ENCODE measurements at regions of chr10 and their contacts with region 1.

Region 1: DNA sequence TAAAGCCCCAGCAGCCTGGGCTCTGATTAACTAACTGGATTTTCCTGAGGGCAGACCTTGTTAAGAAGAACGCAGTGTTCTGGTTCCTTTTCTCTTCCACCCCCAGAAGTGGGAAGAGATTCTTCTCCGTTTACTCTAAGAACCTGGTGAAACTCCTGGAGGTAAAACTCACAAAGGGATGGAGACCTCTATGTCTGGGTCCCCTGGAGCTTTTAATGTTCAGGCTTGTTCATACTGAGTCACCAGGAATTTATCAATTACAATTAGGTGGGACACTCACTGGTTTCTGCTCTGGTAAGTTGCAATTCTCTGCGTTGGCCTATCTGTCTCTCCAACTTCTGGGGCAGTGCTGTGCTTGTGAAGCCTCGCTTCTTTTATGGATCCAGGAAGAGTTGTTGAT is 73.3 kb upstream of the CACNB2 start:
- DNase-seq: no peak
- H3K4me3 ChIP-seq: no peak overlapping the region
- H3K4me3 Mint-ChIP-seq: no peak overlapping the region
- H3K27ac ChIP-seq: no peak overlapping the region
- H3K27ac Mint-ChIP-seq: no peak overlapping the region
- H3K4me1 ChIP-seq: no peaks in the 10 kb centered on the region
- H3K4me1 Mint-ChIP-seq: no peaks in the 10 kb centered on the region
- H3K27me3 ChIP-seq: no peaks in the 10 kb centered on the region
- H3K27me3 Mint-ChIP-seq: peaks cover 0 to 3% of the 10 kb centered on the region in 2 donors

Region 2: DNA sequence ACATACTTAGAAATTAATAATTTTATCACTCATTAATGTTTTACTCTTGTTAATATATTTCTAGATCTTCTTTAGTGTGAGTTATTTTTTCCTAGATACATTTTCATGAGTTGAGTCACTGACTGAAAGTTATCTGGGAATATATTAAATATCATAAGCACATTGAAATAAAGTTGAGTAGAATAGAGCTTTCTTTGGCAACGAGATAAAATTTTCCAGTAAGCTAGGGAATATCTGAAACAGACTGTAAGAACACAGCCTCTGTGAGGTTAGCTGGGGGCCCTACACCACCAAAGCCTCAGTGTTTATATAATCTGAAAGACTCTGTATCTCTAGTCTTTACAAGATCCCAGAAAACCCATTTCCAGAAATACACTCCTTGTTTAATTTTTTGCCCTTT is 1401.5 kb after region 1 on chr10:
- CTCF ChIA-PET with region 1: no interaction called
- POLR2A ChIA-PET with region 1: no interaction called
- intact Hi-C with region 1: loop called (anchors 5 kb)
- DNase-seq: no peak
- H3K4me3 ChIP-seq: no peak overlapping the region
- H3K4me3 Mint-ChIP-seq: no peak overlapping the region
- H3K27ac ChIP-seq: no peak overlapping the region
- H3K27ac Mint-ChIP-seq: no peak overlapping the region
- H3K4me1 ChIP-seq: no peaks in the 10 kb centered on the region
- H3K4me1 Mint-ChIP-seq: no peaks in the 10 kb centered on the region
- H3K27me3 ChIP-seq: no peaks in the 10 kb centered on the region
- H3K27me3 Mint-ChIP-seq: no peaks in the 10 kb centered on the region